Gastrocnemius medialis (tissue), 4 donors: ENCODE measurements at regions of chr9 and their contacts with region 1.

Region 1: GRCh38 chr9:96654443-96655197 is 497 bp downstream of the PRXL2C start:
- DNase-seq: peak; percentile 61 to 84
- ATAC-seq: peak; percentile 79 to 83
- H3K4me3 ChIP-seq: peak overlapping the region; percentile 65 to 74 (median 70)
- H3K27ac ChIP-seq: peak overlapping the region; percentile 93 to 96 (median 95)
- H3K4me1 ChIP-seq: peaks cover 15 to 25% of the 10 kb centered on the region in 2 donors
- H3K27me3 ChIP-seq: no peaks in the 10 kb centered on the region
- CTCF ChIP-seq: peak in 4 of 5 experiments; percentile 33 to 42 (median 36)
- POLR2A ChIP-seq: peak; percentile 68 to 74

Region 2: DNA sequence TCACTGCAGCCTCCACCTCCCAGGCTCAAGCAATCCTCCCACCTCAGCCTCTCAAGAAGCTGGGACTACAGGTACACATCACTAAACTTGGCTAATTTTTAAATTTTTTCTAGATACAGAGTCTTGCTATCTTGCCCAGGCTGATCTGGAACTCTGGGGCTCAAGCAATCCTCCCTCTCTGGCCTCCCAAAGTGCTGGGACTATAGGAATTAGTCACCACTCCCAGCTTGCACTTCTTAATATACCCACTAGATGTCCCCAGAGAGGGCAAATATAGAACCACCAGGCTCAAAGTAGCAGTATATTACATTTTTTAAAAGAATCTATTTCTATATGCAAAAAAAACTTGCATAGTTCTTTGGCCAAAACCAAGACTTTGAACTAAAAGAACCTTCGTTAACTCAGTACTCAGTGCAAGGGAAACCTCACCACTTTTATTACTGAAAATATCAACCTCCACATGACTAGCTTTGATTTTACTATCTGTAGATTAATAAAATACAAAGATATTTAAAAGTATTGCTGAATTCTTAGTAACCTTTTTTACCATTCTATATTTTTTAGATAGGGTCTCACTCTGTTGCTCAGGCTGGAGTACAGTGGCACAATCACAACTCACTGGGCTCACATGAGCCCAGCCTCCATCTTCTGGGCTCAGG is 326.8 kb before region 1 on chr9:
- in situ Hi-C with region 1: loop called in 1 of 4 experiments (anchors 25 kb)
- intact Hi-C with region 1: no loop called
- DNase-seq: no peak
- ATAC-seq: peak in 1 of 2 donors; percentile 70
- H3K4me3 ChIP-seq: no peak overlapping the region
- H3K27ac ChIP-seq: no peak overlapping the region
- H3K4me1 ChIP-seq: no peaks in the 10 kb centered on the region
- H3K27me3 ChIP-seq: no peaks in the 10 kb centered on the region
- CTCF ChIP-seq: peak; percentile 41 to 80 (median 64)
- POLR2A ChIP-seq: no peak

Region 3: GRCh38 chr9:96418074-96418809 is 236.4 kb before region 1 on chr9 and contains the start of gene ZNF367:
- in situ Hi-C with region 1: no loop called
- intact Hi-C with region 1: loop called (anchors 1 kb)
- DNase-seq: peak; percentile 96 to 98
- ATAC-seq: peak; percentile 77 to 82
- H3K4me3 ChIP-seq: peak within 1 kb of the TSS; percentile 71 to 89 (median 84)
- H3K27ac ChIP-seq: peak within 1 kb of the TSS; percentile 99
- H3K4me1 ChIP-seq: peaks cover 21 to 26% of the 10 kb centered on the region in 2 donors
- H3K27me3 ChIP-seq: no peaks in the 10 kb centered on the region
- CTCF ChIP-seq: no peak
- POLR2A ChIP-seq: peak in 1 of 2 donors; percentile 8
- total RNA-seq, gene ZNF367: 0.15 to 5.1 (median 1.7) TPM

Region 4: GRCh38 chr9:96566498-96567207 is 88.0 kb before region 1 on chr9:
- in situ Hi-C with region 1: no loop called
- intact Hi-C with region 1: loop called (anchors 10 kb)
- DNase-seq: peak; percentile 45 to 60
- ATAC-seq: peak; percentile 82 to 91
- H3K4me3 ChIP-seq: peak overlapping the region; percentile 65 to 81 (median 77)
- H3K27ac ChIP-seq: peak overlapping the region; percentile 69 to 84 (median 75)
- H3K4me1 ChIP-seq: peaks cover 0 to 11% of the 10 kb centered on the region in 2 donors
- H3K27me3 ChIP-seq: no peaks in the 10 kb centered on the region
- CTCF ChIP-seq: peak; percentile 31 to 77 (median 62)
- POLR2A ChIP-seq: peak in 1 of 2 donors; percentile 12

Region 5: GRCh38 chr9:96604004-96604319 is 50.7 kb before region 1 on chr9:
- in situ Hi-C with region 1: loop called in 1 of 4 experiments (anchors 10 kb)
- intact Hi-C with region 1: no loop called
- DNase-seq: peak; percentile 46 to 62
- ATAC-seq: peak; percentile 94 to 95
- H3K4me3 ChIP-seq: peak overlapping the region; percentile 10 to 37 (median 27)
- H3K27ac ChIP-seq: peak overlapping the region; percentile 73 to 84 (median 78)
- H3K4me1 ChIP-seq: peaks cover 7 to 13% of the 10 kb centered on the region in 2 donors
- H3K27me3 ChIP-seq: no peaks in the 10 kb centered on the region
- CTCF ChIP-seq: no peak
- POLR2A ChIP-seq: no peak

Region 6: DNA sequence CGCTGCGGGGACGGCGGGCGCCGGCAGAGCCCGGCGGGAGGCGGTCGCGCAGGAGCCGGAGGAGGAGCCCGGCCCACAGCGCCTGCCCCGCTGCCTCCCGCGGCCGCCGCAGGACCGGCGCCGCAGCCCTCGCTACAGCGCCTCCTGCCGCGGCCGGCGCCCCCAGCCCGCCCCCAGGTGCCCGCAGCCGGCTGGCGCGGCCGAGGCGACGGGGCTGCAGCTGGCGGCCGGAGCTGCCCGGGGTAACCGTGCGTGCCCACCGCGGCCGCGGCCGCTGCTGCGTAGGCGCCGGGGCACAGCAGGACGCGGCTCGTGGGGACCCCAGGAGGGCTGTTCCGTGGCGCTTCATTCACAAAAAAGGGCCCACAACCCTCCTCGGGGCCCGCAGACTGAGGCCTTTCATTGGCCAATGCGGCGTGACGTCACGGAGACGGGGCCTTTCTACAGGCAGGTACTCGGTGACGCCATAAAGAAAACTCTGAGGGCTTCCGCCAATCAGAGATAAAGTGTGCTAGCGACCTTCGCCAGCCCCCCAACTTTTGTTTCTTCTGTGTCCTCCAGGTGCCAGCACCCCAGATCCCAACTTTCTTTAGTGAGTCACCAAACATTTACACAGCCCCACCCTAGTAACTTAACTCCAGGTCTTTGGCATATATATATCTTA is 35.0 kb before region 1 on chr9 and contains the start of gene CDC14B:
- in situ Hi-C with region 1: no loop called
- intact Hi-C with region 1: loop called (anchors 2 kb)
- DNase-seq: peak; percentile 57 to 74
- ATAC-seq: peak; percentile 58 to 70
- H3K4me3 ChIP-seq: peak within 1 kb of the TSS; percentile 60 to 71 (median 66)
- H3K27ac ChIP-seq: peak within 1 kb of the TSS; percentile 78 to 98 (median 89)
- H3K4me1 ChIP-seq: peaks cover 0 to 8% of the 10 kb centered on the region in 2 donors
- H3K27me3 ChIP-seq: no peaks in the 10 kb centered on the region
- CTCF ChIP-seq: peak in 2 of 5 experiments; percentile 9 to 14
- POLR2A ChIP-seq: peak in 1 of 2 donors; percentile 27
- total RNA-seq, gene CDC14B: 2.0 to 9.4 (median 5.5) TPM

Region 7: DNA sequence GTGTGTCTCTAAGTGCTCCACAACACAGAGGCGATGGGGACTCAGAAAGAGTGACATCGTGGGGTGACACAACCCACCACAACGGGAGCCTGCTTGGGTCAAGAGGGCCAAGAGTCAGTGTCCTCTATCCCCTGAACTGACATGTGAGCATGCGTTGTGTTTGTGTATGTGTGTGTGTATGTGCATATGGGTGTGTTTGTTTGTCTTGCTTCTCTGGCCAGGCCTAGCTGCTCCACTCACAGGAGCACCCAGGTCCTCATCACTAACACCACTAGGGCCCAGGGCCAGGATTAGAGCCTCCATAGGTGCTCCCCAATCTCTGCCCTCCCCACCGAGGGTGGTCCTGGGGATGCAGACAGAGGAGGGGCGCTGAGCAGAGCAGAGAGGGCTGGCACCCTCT is 499.3 kb after region 1 on chr9:
- in situ Hi-C with region 1: no loop called
- intact Hi-C with region 1: no loop called
- DNase-seq: no peak
- ATAC-seq: no peak
- H3K4me3 ChIP-seq: no peak overlapping the region
- H3K27ac ChIP-seq: no peak overlapping the region
- H3K4me1 ChIP-seq: no peaks in the 10 kb centered on the region
- H3K27me3 ChIP-seq: no peaks in the 10 kb centered on the region
- CTCF ChIP-seq: no peak
- POLR2A ChIP-seq: no peak